CD4-positive, alpha-beta memory T cell (primary cell): ENCODE measurements at regions of chr4 and their contacts with region 1.

Region 1: GRCh38 chr4:23305026-23305425 is 584.8 kb downstream of the PPARGC1A start:
- DNase-seq: peak in 2 of 5 donors; percentile 5 to 17
- H3K4me3 ChIP-seq: no peak overlapping the region
- H3K4me3 Mint-ChIP-seq: no peak overlapping the region
- H3K27ac ChIP-seq: no peak overlapping the region
- H3K27ac Mint-ChIP-seq: no peak overlapping the region
- H3K4me1 ChIP-seq: no peaks in the 10 kb centered on the region
- H3K4me1 Mint-ChIP-seq: peaks cover 6 to 9% (median 7%) of the 10 kb centered on the region in 4 donors
- H3K27me3 ChIP-seq: no peaks in the 10 kb centered on the region
- H3K27me3 Mint-ChIP-seq: no peaks in the 10 kb centered on the region

Region 2: GRCh38 chr4:23163647-23164436 is 141.2 kb before region 1 on chr4:
- CTCF ChIA-PET with region 1: no interaction called
- POLR2A ChIA-PET with region 1: no interaction called
- intact Hi-C with region 1: loop called (anchors 5 kb)
- DNase-seq: no peak
- H3K4me3 ChIP-seq: no peak overlapping the region
- H3K4me3 Mint-ChIP-seq: no peak overlapping the region
- H3K27ac ChIP-seq: no peak overlapping the region
- H3K27ac Mint-ChIP-seq: no peak overlapping the region
- H3K4me1 ChIP-seq: no peaks in the 10 kb centered on the region
- H3K4me1 Mint-ChIP-seq: no peaks in the 10 kb centered on the region
- H3K27me3 ChIP-seq: no peaks in the 10 kb centered on the region
- H3K27me3 Mint-ChIP-seq: no peaks in the 10 kb centered on the region